Activated naive CD4-positive, alpha-beta T cell treated with anti-CD3 and anti-CD28 coated beads for 36 hours (primary cell): ENCODE measurements at regions of chr9 and their contacts with region 1.

Region 1: DNA sequence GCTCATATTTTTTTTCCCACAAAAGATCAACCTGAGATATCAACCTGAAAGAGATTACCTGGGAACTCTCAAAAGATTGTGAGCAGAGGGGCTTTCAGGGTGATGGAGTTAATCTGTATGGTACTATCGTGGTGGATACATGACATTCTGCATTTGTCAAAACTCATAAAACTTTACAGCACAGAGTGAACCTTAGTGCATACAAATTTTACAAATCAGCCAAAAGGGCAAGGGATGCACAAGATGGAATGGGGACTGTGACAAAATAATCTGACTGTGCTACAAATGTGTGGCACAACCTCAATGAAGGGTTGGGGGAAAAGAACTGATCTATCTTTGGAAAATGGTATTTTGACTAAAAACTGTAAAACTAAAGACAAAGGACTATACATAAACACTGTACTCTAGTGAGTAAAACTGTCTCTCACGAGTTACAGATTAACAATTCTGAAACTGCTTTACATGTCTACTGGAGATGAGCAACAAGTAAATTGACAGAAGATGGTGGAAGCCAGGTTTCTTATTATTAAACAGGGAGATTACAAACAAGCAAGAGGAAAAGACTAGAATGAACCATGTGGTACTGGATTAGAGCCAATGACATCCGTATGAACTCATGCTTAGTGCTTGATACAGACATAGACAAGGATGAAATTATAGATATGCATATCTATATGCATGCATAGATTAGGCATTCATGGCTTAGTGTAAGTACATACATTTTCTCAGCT is 24.8 kb upstream of the RLN1 start:
- DNase-seq: peak; percentile 22
- H3K4me3 Mint-ChIP-seq: no peak overlapping the region
- H3K27ac Mint-ChIP-seq: peak overlapping the region; percentile 35
- H3K4me1 Mint-ChIP-seq: peaks cover 25% of the 10 kb centered on the region
- H3K27me3 Mint-ChIP-seq: no peaks in the 10 kb centered on the region

Region 2: GRCh38 chr9:4886698-4887097 is 477.8 kb before region 1 on chr9:
- CTCF ChIA-PET with region 1: no interaction called
- intact Hi-C with region 1: no loop called
- DNase-seq: no peak
- H3K4me3 Mint-ChIP-seq: no peak overlapping the region
- H3K27ac Mint-ChIP-seq: no peak overlapping the region
- H3K4me1 Mint-ChIP-seq: no peaks in the 10 kb centered on the region
- H3K27me3 Mint-ChIP-seq: no peaks in the 10 kb centered on the region

Region 3: DNA sequence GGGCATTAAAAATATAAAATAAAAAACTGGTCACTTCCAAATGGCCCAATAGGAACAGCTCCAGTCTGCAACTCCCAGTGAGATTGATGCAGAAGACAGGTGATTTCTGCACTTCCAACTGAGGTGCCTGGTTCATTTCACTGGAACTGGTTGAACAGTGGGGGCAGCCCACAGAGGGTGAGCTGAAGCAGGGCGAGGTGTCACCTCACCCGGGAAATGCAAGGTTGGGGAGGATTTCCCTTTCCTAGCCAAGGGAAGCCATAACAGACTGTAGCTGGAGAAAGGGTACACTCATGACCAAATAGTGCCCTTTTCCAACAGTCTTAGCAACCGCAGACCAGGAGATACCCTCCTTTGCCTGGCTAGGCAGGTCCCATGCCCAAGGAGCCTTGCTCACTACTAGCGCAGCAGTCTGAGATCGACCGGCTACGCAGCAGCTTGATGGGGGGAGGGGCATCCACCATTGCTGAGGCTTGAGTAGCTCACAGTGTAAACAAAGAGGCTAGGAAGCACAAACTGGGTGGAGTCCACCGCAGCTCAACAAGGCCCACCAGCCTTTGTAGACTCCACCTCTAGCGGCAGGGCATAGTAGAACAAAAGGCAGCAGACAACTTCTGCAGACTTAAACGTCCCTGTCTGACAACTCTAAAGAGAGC is 37.4 kb before region 1 on chr9:
- CTCF ChIA-PET with region 1: no interaction called
- intact Hi-C with region 1: no loop called
- DNase-seq: peak; percentile 23
- H3K4me3 Mint-ChIP-seq: no peak overlapping the region
- H3K27ac Mint-ChIP-seq: no peak overlapping the region
- H3K4me1 Mint-ChIP-seq: peaks cover 19% of the 10 kb centered on the region
- H3K27me3 Mint-ChIP-seq: no peaks in the 10 kb centered on the region

Region 4: DNA sequence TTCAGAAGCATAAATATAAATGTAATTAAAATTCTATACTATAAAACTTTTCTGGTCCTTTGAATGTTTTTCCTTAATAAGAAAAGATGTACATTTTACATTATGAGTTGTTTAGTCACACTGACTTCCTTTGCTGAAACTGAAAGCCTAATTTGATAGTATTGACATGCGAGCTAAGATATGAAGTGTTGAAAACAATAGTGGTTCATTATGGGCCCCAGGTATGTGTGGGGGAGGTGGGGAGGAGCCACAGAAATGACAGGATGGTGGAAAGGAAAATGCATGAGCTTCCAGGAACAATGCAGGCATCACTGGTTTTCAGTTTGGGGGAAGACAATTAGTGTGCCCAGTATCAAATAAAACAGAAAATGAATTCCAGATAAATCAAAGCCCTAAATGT is 10.6 kb after region 1 on chr9:
- CTCF ChIA-PET with region 1: no interaction called
- intact Hi-C with region 1: loop called (anchors 1 kb)
- DNase-seq: peak; percentile 74
- H3K4me3 Mint-ChIP-seq: peak overlapping the region; percentile 1
- H3K27ac Mint-ChIP-seq: no peak overlapping the region
- H3K4me1 Mint-ChIP-seq: peaks cover 31% of the 10 kb centered on the region
- H3K27me3 Mint-ChIP-seq: no peaks in the 10 kb centered on the region

Region 5: DNA sequence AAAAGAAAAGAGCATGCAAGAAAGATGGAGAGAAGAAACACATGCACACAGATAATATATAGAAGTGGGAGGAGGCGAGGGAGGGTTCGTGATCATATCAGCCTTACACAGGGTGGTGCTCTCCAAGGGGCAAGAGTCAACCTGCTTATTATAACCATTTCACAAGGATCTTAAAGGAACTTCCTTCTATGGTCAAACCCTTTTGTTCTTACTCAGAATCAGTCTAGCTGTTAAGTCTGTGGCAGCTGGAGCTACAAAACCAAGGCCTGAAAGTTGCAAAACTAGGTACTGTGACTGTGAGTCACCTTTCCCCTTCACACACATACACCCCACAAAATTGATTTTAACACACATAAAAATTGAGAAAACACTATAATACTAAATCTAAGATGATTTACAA is 487.0 kb after region 1 on chr9:
- CTCF ChIA-PET with region 1: no interaction called
- intact Hi-C with region 1: loop called (anchors 1 kb)
- DNase-seq: peak; percentile 73
- H3K4me3 Mint-ChIP-seq: no peak overlapping the region
- H3K27ac Mint-ChIP-seq: peak overlapping the region; percentile 26
- H3K4me1 Mint-ChIP-seq: peaks cover 41% of the 10 kb centered on the region
- H3K27me3 Mint-ChIP-seq: no peaks in the 10 kb centered on the region